Activated CD4-positive, alpha-beta T cell treated with anti-CD3 and anti-CD28 coated beads for 36 hours (primary cell): ENCODE measurements at regions of chr3 and their contacts with region 1.

Region 1: GRCh38 chr3:51941798-51942602 is at the starts of genes PARP3 and RRP9:
- DNase-seq: peak; percentile 100
- ATAC-seq: peak; percentile 95
- H3K4me3 Mint-ChIP-seq: peak within 1 kb of the TSS; percentile 84
- H3K27ac Mint-ChIP-seq: peak within 1 kb of the TSS; percentile 83
- H3K4me1 Mint-ChIP-seq: peaks cover 33% of the 10 kb centered on the region
- H3K27me3 Mint-ChIP-seq: no peaks in the 10 kb centered on the region
- total RNA-seq, gene PARP3: 10.6 to 12.2 TPM
- total RNA-seq, gene RRP9: 38.2 to 39.3 TPM

Region 2: DNA sequence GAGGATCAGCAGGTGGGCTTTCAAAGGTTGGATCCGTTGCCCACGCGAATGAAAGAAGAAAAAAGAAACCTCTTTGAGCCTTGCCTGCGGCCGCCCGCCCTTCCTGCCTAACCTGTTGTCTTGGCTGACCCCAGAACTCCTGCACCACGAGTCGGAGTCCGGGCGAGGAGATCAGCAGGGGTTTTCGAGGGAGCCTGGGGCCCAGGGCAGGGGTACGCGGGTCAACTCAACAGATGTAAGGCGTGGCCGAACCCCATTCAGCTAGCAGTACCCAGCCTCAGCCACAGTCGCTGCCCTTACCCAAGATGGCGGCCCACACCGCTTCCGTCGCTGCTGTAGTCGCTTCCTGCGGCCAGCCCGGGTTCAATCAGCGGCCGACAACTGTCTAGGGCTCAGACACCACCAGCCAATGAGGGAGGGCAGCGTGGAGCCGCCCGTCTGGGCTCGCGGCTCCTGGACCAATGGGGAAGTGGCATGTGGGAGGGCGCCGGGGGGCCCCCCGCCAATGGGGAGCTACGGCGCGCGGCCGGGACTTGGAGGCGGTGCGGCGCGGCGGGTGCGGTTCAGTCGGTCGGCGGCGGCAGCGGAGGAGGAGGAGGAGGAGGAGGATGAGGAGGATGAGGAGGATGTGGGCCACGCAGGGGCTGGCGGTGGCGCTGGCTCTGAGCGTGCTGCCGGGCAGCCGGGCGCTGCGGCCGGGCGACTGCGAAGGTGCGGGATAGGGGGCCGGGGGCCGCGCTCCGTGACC is 557.1 kb before region 1 on chr3 and contains the start of gene MANF:
- CTCF ChIA-PET with region 1: no interaction called
- POLR2A ChIA-PET with region 1: no interaction called
- intact Hi-C with region 1: loop called in 1 of 2 experiments (anchors 1 kb)
- DNase-seq: peak; percentile 99
- ATAC-seq: peak; percentile 97
- H3K4me3 Mint-ChIP-seq: peak within 1 kb of the TSS; percentile 93
- H3K27ac Mint-ChIP-seq: peak within 1 kb of the TSS; percentile 99
- H3K4me1 Mint-ChIP-seq: peaks cover 46% of the 10 kb centered on the region
- H3K27me3 Mint-ChIP-seq: no peaks in the 10 kb centered on the region
- total RNA-seq, gene MANF: 124 to 129 TPM

Region 3: DNA sequence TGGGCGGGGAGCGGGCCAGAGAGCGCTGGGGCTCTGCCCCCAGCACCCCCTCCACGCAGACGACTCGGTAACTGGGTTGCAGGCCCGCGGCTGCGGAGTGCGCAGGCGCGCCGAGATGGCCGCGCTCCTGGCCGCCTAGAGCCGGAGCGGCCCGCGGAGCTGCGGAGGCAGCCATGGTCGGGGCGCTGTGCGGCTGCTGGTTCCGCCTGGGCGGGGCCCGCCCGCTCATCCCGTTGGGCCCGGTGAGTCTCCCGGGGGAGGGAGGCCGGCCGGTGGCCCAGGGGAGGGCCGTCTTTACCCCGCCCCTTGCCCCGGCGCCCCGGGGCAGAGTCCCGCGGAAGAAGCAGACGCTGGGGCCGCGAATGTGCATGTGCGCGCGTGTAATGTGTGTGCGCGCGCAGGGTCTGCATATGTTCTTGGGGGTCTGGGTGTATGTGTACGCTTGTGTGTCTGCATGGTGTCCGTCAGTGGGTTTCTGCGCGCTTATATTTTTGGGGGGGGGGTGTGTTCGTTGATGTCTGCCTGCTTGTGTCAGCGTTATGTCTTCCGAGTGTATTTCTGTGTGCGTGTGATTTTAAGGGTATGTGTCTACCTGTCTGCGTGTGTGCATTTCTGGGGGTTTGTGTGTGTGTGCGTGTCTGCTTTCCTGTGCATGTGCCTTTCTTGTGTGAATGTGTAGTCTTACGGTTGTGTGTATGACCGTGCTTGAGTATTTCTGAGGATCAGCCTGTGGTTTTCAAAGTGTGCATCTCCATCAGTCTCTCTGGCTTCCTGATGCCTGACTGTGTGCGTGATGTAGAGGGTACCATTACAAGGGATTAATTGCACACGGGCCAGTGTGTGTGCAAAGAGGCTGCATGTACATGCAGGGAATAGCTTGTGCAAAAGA is 33.2 kb after region 1 on chr3 and contains the start of gene ABHD14A:
- CTCF ChIA-PET with region 1: interaction called, 30 read pairs
- POLR2A ChIA-PET with region 1: interaction called, 4 read pairs
- intact Hi-C with region 1: loop called (anchors 1 kb)
- DNase-seq: peak; percentile 81
- ATAC-seq: peak; percentile 70
- H3K4me3 Mint-ChIP-seq: peak within 1 kb of the TSS; percentile 97
- H3K27ac Mint-ChIP-seq: peak within 1 kb of the TSS; percentile 97
- H3K4me1 Mint-ChIP-seq: peaks cover 34% of the 10 kb centered on the region
- H3K27me3 Mint-ChIP-seq: no peaks in the 10 kb centered on the region
- total RNA-seq, gene ABHD14A: 6.3 to 7.5 TPM

Region 4: GRCh38 chr3:52108302-52109232 is 166.6 kb after region 1 on chr3:
- CTCF ChIA-PET with region 1: no interaction called
- POLR2A ChIA-PET with region 1: no interaction called
- intact Hi-C with region 1: no loop called
- DNase-seq: no peak
- ATAC-seq: no peak
- H3K4me3 Mint-ChIP-seq: no peak overlapping the region
- H3K27ac Mint-ChIP-seq: no peak overlapping the region
- H3K4me1 Mint-ChIP-seq: no peaks in the 10 kb centered on the region
- H3K27me3 Mint-ChIP-seq: no peaks in the 10 kb centered on the region

Region 5: DNA sequence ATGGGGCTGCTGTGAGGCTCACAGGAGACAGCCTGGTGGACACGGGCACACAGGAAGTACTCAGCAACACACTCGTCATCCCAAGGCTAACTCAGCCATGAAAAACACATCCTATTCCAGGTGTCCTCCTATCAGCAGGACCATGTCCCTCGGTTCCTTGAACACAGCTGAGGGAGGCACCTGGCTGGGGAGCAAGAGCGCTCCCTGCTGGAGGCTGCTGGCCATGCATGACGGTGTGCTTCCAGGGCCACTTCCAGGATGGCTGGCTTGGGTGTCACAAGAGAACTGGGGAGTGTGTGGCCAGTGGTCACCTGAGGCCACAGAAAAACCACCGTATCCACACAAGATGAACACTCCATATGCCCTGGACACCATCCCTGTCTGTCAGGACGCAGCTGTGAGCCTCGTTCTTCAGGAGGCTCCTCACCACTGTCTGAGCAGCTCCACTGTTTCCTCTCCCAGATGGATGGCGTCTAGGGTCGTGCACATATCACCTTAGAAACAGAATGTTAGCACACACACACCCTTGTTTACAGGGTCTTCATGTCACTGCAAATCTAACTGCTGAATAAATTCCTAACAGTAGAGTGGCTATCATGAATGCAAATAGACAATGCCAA is 181.2 kb after region 1 on chr3:
- CTCF ChIA-PET with region 1: interaction called, 3 read pairs
- POLR2A ChIA-PET with region 1: no interaction called
- intact Hi-C with region 1: loop called in 1 of 2 experiments (anchors 1 kb)
- DNase-seq: peak; percentile 83
- ATAC-seq: peak; percentile 93
- H3K4me3 Mint-ChIP-seq: no peak overlapping the region
- H3K27ac Mint-ChIP-seq: no peak overlapping the region
- H3K4me1 Mint-ChIP-seq: peaks cover 6% of the 10 kb centered on the region
- H3K27me3 Mint-ChIP-seq: no peaks in the 10 kb centered on the region

Region 6: DNA sequence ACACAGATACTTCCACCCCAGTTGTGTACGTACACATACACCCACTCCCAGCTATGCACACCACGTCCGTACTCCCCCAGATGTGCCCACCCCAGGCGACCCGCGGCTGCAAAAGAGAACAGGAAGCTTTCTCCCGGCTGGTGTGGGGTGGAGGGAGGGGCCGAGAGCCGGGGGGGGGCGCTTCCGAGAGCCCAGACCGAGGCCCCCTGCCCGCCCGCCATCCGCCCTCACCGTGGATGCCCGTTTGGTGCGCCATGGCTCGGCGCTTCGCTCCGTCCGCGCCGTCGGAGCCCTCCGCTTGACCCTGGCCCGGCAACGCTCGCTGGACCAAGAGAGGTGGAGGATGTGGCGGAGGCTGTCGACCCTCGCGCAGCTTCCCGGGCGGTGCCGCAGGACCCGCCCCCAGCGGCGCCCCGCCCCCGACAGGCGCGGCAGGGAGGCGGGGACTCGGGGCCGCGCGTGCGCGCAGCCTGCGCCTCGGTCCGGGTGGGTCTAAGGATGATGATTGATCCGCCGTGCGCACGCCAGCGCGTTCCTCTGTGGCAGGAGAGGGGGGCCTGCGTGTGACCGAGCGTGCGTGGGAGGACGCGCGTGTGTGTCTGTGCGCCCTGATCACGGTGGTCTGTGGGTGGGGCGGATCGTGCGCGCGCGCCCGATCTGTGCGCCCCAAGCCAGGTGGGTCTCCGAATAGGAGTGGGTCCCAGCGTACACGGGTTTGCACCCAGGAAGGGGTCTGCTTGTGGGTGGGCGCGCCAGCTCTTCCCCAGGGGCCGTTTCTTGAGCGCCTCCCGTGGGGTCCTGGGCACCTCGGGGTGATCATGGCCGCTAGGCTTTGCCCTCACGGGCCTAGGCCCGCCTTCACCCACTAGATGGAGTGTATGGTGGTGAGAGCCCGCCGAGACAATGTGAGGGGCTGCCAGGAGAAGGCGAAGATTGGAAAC is 297.0 kb after region 1 on chr3 and contains the start of gene TWF2:
- CTCF ChIA-PET with region 1: no interaction called
- POLR2A ChIA-PET with region 1: no interaction called
- intact Hi-C with region 1: loop called in 1 of 2 experiments (anchors 1 kb)
- DNase-seq: peak; percentile 92
- ATAC-seq: peak; percentile 67
- H3K4me3 Mint-ChIP-seq: peak within 1 kb of the TSS; percentile 99
- H3K27ac Mint-ChIP-seq: peak within 1 kb of the TSS; percentile 99
- H3K4me1 Mint-ChIP-seq: peaks cover 70% of the 10 kb centered on the region
- H3K27me3 Mint-ChIP-seq: no peaks in the 10 kb centered on the region
- total RNA-seq, gene TWF2: 85.0 to 93.5 TPM

Region 7: DNA sequence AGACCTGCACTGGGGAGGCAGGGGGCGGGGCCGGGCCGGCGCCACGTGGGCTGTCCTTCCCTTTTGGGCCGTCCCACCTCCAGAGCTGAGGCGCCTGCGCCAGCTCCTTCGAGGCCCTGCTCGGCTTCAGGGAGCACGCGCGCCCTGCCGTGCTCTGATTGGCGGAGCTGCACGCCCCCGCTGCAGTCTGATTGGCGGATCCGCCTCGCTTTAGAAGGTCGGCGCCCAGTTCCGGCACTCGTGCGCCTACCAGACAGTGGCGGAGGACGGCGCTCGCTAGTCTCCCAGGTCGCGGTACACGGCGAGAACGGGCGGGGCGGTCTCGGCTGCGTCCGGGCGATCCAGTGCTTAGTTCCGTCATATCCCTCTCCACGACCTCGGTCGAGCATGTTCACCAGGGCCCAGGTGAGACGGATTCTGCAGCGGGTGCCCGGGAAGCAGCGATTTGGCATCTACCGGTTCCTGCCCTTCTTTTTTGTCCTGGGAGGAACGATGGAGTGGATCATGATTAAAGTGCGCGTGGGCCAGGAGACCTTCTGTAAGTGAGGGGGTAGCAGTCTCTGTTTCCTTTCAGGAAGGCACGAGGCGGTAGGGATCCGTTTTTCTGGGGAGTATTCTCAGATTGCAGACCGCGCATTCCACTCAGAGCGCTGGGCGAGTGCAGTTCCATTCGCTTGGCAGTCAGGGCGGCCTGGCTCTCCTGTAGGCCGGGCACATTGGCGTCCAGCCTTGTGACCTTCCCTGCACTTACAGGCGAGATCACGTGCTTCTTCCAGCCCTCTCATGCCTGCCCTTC is 594.6 kb after region 1 on chr3 and contains the start of gene UQCC5:
- CTCF ChIA-PET with region 1: no interaction called
- POLR2A ChIA-PET with region 1: no interaction called
- intact Hi-C with region 1: loop called in 1 of 2 experiments (anchors 1 kb)
- DNase-seq: peak; percentile 99
- ATAC-seq: peak; percentile 91
- H3K4me3 Mint-ChIP-seq: peak within 1 kb of the TSS; percentile 100
- H3K27ac Mint-ChIP-seq: peak within 1 kb of the TSS; percentile 99
- H3K4me1 Mint-ChIP-seq: peaks cover 49% of the 10 kb centered on the region
- H3K27me3 Mint-ChIP-seq: no peaks in the 10 kb centered on the region
- total RNA-seq, gene UQCC5: 12.0 to 12.7 TPM